ENCODE measurements at regions of chr6 and their contacts with region 1.

Region 1: GRCh38 chr6:163180874-163181541 is 233.5 kb upstream of the QKI start:
- DNase-seq: peak; percentile 82 to 83
- ATAC-seq: peak; percentile 94 to 97 (median 96)
- H3K4me3 ChIP-seq: peak overlapping the region in 5 of 10 donors; percentile 2 to 31 (median 26)
- H3K27ac ChIP-seq: peak overlapping the region in 6 of 10 donors; percentile 5 to 33 (median 25)
- H3K4me1 ChIP-seq: peaks cover 4 to 36% (median 23%) of the 10 kb centered on the region in 9 donors
- H3K27me3 ChIP-seq: no peaks in the 10 kb centered on the region
- CTCF ChIP-seq: peak; percentile 74 to 96 (median 91)

Region 2: DNA sequence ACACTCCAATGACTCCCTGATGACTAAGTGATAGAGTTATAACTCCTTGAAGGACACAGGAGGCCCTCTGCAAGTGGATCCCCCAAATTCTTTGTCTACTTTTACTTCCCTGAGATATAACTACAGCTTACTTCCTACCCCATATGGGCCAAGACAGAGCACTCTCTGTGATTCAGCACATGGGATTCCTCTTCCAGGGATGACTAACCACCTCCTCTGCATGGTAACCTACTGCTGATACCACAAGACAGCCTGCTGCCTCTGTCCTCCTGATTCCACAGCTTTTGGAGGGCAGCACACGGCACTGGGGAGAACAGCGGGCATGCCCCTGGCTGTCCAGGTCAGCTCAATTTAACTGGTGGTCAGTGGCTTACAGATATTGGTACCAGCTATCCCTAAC is 1231.5 kb before region 1 on chr6:
- intact Hi-C with region 1: no loop called
- DNase-seq: no peak
- ATAC-seq: no peak
- H3K4me3 ChIP-seq: no peak overlapping the region
- H3K27ac ChIP-seq: no peak overlapping the region
- H3K4me1 ChIP-seq: peaks cover 0 to 23% (median 13%) of the 10 kb centered on the region in 9 donors
- H3K27me3 ChIP-seq: no peaks in the 10 kb centered on the region
- CTCF ChIP-seq: no peak

Region 3: GRCh38 chr6:163309491-163310026 is 128.6 kb after region 1 on chr6:
- intact Hi-C with region 1: loop called in 1 of 10 experiments (anchors 10 kb)
- DNase-seq: no peak
- ATAC-seq: no peak
- H3K4me3 ChIP-seq: no peak overlapping the region
- H3K27ac ChIP-seq: no peak overlapping the region
- H3K4me1 ChIP-seq: peaks cover 0 to 5% (median 0%) of the 10 kb centered on the region in 9 donors
- H3K27me3 ChIP-seq: no peaks in the 10 kb centered on the region
- CTCF ChIP-seq: no peak

Region 4: DNA sequence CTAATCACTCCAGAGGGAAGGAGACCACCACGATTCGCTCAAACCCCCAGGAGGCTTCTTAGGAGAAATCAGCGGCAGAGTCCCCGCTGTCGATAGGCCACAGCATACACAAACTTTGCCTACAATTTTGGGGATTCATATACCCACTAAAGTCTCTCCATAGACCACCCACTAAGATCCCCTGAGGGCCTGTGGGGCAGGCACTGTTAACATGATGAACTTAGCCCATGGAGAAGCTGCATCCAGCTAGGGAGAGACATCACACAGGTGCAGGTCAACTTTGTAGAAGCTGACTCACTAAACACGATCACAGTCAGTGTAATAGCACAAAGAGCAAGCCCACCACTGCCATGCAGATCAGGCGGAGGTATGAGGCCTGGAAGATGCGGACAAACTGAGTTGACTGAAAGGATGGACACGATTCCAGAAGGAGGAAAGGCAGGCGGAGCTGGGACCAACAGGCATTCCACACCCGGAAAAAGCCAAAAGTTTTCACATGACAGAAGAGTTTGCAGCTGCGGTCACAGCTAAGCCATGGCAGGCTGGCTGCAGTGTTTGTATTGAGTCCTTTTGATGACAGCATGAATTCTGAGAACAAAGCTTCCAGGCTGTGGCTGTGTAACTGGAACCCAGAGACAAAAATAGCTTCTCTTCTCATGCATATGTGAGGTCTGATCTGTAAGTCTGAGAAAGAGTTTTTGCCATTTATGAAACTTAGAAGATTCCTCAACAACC is 157.8 kb after region 1 on chr6:
- intact Hi-C with region 1: loop called in 3 of 10 experiments (anchors 5 to 10 kb)
- DNase-seq: peak in 1 of 2 donors; percentile 72
- ATAC-seq: peak; percentile 40 to 77 (median 64)
- H3K4me3 ChIP-seq: peak overlapping the region in 1 of 10 donors; percentile 5
- H3K27ac ChIP-seq: peak overlapping the region; percentile 71 to 98 (median 86)
- H3K4me1 ChIP-seq: peaks cover 28 to 88% (median 58%) of the 10 kb centered on the region in 9 donors
- H3K27me3 ChIP-seq: no peaks in the 10 kb centered on the region
- CTCF ChIP-seq: no peak

Region 5: GRCh38 chr6:163554663-163555062 is 373.7 kb after region 1 on chr6:
- intact Hi-C with region 1: loop called in 1 of 10 experiments (anchors 10 kb)
- DNase-seq: peak in 1 of 2 donors; percentile 44
- ATAC-seq: peak in 4 of 8 donors; percentile 29 to 53 (median 45)
- H3K4me3 ChIP-seq: no peak overlapping the region
- H3K27ac ChIP-seq: peak overlapping the region in 2 of 10 donors; percentile 37 to 49
- H3K4me1 ChIP-seq: peaks cover 0 to 69% (median 34%) of the 10 kb centered on the region in 9 donors
- H3K27me3 ChIP-seq: no peaks in the 10 kb centered on the region
- CTCF ChIP-seq: peak in 8 of 9 donors; percentile 29 to 64 (median 54)

Region 6: DNA sequence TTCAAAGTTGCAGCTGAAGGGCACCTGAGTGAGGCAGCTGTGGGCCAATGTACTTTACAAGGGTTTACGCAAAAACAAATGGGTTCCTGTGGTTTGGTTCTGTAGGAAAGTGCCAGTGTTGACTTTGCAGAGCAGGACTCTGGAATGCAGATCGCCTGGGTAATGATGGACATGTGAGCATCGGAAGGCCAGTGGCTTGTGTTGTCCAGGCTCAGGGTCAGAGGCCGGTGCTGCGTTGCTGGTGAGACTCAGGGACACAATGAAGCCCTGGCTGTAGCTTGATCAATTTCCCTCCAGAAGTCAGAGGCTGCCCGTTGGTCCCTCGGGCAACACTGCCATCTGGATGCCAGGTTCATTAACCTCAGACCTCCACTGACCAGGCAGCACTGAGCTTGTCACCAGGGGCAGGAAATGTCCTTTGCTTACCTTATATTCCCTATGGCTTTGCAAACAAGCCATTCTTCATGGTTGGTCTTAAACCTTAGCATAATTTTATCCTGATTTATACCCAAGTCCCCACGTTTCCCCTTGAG is 986.9 kb after region 1 on chr6:
- intact Hi-C with region 1: loop called in 1 of 10 experiments (anchors 5 kb)
- DNase-seq: no peak
- ATAC-seq: peak in 6 of 8 donors; percentile 44 to 76 (median 67)
- H3K4me3 ChIP-seq: no peak overlapping the region
- H3K27ac ChIP-seq: no peak overlapping the region
- H3K4me1 ChIP-seq: peaks cover 0 to 5% (median 0%) of the 10 kb centered on the region in 9 donors
- H3K27me3 ChIP-seq: no peaks in the 10 kb centered on the region
- CTCF ChIP-seq: peak in 5 of 9 donors; percentile 12 to 42 (median 37)

Measured in heart right ventricle (tissue), 16 donors.